Right cardiac atrium (tissue), 5 donors: ENCODE measurements at regions of chr3 and their contacts with region 1.

Region 1: DNA sequence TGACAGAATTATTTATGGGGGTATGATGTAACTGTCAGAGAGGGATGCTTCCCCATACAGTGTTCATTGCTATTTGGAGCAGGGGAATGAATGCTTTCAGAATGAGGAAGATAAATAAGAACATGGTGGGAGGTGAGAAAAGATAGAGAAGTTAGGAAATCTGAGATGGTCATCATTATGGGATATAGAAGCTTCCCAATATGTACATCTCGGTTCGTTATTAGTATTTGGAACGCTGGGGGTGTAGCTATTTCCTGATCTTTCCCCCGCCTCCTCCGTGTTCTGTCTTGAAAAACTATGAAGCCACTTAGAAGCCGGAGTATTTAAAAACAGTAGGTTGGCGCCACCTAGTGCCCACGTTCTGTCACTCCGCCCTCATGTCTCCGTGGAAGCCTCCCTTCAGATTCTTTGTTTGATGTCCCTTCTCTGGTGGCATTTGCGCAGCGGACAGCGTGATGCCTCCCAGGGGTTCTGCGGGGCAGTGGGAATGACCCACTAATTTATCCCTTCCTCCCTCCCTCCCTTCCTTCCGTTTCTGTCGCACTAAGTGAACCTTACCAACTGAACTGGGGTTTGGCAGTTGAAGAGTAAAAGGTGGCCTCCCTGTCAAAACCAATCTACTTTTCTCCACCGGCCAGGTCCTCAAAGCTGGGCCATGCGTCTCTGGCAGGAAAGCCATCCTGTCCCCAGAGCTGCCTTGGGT is 184.5 kb downstream of the FEZF2 start:
- DNase-seq: peak; percentile 75 to 90 (median 86)
- ATAC-seq: peak; percentile 67 to 73
- H3K4me3 ChIP-seq: no peak overlapping the region
- H3K27ac ChIP-seq: no peak overlapping the region
- H3K4me1 ChIP-seq: peaks cover 7% of the 10 kb centered on the region
- H3K27me3 ChIP-seq: no peaks in the 10 kb centered on the region

Region 2: DNA sequence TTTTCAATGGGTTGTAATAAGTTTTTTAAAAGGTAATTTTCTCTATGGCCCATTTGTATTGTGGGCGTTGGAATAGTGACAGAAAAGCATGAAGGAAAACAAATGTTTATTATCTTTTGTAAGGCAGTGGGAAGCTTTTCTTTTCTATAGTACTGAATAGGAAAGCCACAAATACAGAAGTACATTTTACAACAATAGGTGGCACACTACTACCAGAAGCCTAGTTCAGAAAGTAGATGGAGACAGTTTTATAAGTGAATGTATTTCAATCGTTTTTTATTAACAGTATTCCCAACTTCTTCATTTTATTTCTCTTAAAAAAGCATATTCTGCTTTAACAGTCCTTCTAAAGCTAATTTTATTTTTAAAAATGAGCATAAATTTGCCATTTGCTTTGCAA is 330.8 kb before region 1 on chr3:
- intact Hi-C with region 1: loop called (anchors 2 to 10 kb)
- DNase-seq: no peak
- ATAC-seq: peak in 1 of 2 donors; percentile 45
- H3K4me3 ChIP-seq: no peak overlapping the region
- H3K27ac ChIP-seq: no peak overlapping the region
- H3K4me1 ChIP-seq: peaks cover 3% of the 10 kb centered on the region
- H3K27me3 ChIP-seq: no peaks in the 10 kb centered on the region

Region 3: GRCh38 chr3:61864886-61865285 is 323.9 kb before region 1 on chr3:
- intact Hi-C with region 1: loop called in 1 of 4 experiments (anchors 10 kb)
- DNase-seq: no peak
- ATAC-seq: no peak
- H3K4me3 ChIP-seq: no peak overlapping the region
- H3K27ac ChIP-seq: no peak overlapping the region
- H3K4me1 ChIP-seq: peaks cover 7% of the 10 kb centered on the region
- H3K27me3 ChIP-seq: no peaks in the 10 kb centered on the region